Activated CD4-positive, alpha-beta memory T cell treated with anti-CD3 and anti-CD28 coated beads for 36 hours (primary cell): ENCODE measurements at regions of chr1 and their contacts with region 1.

Region 1: GRCh38 chr1:107963601-107964335 is 1.2 kb downstream of the VAV3 start:
- DNase-seq: peak; percentile 64
- H3K4me3 Mint-ChIP-seq: peak overlapping the region; percentile 86
- H3K27ac Mint-ChIP-seq: peak overlapping the region; percentile 92
- H3K4me1 Mint-ChIP-seq: peaks cover 27% of the 10 kb centered on the region
- H3K27me3 Mint-ChIP-seq: peaks cover 10% of the 10 kb centered on the region

Region 2: DNA sequence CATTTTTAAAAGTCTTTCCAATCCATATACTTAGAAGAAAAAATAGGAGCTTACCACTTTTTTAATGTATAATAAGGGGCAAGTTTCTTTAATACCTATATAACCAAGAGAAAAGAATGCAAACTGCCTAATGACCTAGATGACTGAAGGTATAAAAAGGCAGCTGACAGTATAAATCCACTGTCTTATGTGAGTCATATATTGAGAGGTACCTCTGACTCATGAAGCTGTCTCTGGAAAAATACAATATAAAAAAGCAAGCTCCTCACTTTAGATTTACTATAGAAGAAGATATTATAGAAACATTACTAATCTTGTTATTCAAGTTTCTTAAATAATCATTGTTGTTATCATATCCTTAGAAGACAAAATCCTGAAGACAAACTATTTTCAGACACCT is 143.0 kb before region 1 on chr1:
- CTCF ChIA-PET with region 1: interaction called, 4 read pairs
- POLR2A ChIA-PET with region 1: no interaction called
- intact Hi-C with region 1: loop called (anchors 1 kb)
- DNase-seq: no peak
- H3K4me3 Mint-ChIP-seq: no peak overlapping the region
- H3K27ac Mint-ChIP-seq: no peak overlapping the region
- H3K4me1 Mint-ChIP-seq: peaks cover 19% of the 10 kb centered on the region
- H3K27me3 Mint-ChIP-seq: no peaks in the 10 kb centered on the region

Region 3: GRCh38 chr1:107936498-107937481 is 27.0 kb before region 1 on chr1:
- CTCF ChIA-PET with region 1: interaction called, 13 read pairs
- POLR2A ChIA-PET with region 1: interaction called, 10 read pairs
- intact Hi-C with region 1: loop called (anchors 1 kb)
- DNase-seq: peak; percentile 72
- H3K4me3 Mint-ChIP-seq: peak overlapping the region; percentile 49
- H3K27ac Mint-ChIP-seq: peak overlapping the region; percentile 64
- H3K4me1 Mint-ChIP-seq: peaks cover 44% of the 10 kb centered on the region
- H3K27me3 Mint-ChIP-seq: no peaks in the 10 kb centered on the region

Region 4: GRCh38 chr1:107976836-107977235 is 13.1 kb after region 1 on chr1:
- CTCF ChIA-PET with region 1: interaction called, 6 read pairs
- POLR2A ChIA-PET with region 1: interaction called, 4 read pairs
- intact Hi-C with region 1: loop called (anchors 1 kb)
- DNase-seq: no peak
- H3K4me3 Mint-ChIP-seq: no peak overlapping the region
- H3K27ac Mint-ChIP-seq: no peak overlapping the region
- H3K4me1 Mint-ChIP-seq: peaks cover 16% of the 10 kb centered on the region
- H3K27me3 Mint-ChIP-seq: peaks cover 5% of the 10 kb centered on the region

Region 5: GRCh38 chr1:108079440-108080025 is 115.8 kb after region 1 on chr1:
- CTCF ChIA-PET with region 1: no interaction called
- POLR2A ChIA-PET with region 1: no interaction called
- intact Hi-C with region 1: loop called (anchors 2 kb)
- DNase-seq: peak; percentile 70
- H3K4me3 Mint-ChIP-seq: no peak overlapping the region
- H3K27ac Mint-ChIP-seq: peak overlapping the region; percentile 64
- H3K4me1 Mint-ChIP-seq: peaks cover 61% of the 10 kb centered on the region
- H3K27me3 Mint-ChIP-seq: no peaks in the 10 kb centered on the region

Region 6: DNA sequence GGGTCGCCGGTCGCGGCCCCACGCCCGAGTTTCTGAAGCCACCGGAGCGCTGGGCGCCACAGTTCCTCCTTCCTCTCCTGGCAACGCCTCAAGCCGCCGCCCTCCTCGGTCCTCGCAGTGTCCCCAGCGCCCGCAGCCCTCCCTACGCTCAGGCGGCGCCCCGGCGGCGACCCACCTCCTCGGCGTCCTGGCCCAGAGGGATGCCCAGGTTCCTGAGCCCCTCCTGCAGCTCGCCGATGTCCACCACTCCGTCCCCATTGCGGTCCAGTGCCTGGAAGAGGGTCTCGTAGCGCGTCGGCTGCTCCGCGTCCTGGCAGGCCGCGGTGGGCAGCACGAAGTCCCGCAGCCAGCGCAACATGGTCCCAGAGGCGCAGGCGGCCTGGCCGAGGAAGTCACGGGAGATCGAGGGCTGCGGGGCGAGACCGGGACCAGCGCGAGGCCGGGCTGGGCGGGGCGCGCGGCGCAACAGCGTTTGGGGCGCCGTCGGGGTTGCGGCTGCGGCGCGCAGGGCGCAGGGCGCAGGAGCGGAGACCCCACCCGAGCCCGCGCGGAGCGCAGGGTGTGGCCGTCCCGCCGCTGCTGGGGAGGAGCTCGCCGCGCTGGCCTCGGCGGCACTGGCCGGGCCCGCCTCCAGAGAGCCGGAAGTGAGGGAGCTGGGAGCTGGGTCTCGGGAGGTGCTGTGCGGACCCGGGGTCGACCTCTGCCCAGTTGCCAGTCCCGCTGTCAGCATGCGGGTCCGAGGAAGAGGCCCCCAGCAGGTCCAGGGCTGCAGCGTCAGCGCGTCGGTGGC is 236.2 kb after region 1 on chr1 and contains the start of gene SLC25A24:
- CTCF ChIA-PET with region 1: no interaction called
- POLR2A ChIA-PET with region 1: interaction called, 3 read pairs
- intact Hi-C with region 1: loop called (anchors 2 kb)
- DNase-seq: peak; percentile 83
- H3K4me3 Mint-ChIP-seq: peak within 1 kb of the TSS; percentile 85
- H3K27ac Mint-ChIP-seq: peak within 1 kb of the TSS; percentile 61
- H3K4me1 Mint-ChIP-seq: peaks cover 29% of the 10 kb centered on the region
- H3K27me3 Mint-ChIP-seq: no peaks in the 10 kb centered on the region
- total RNA-seq, gene SLC25A24: 18.1 to 19.4 TPM